ENCODE measurements at regions of chr1 and their contacts with region 1.

Region 1: DNA sequence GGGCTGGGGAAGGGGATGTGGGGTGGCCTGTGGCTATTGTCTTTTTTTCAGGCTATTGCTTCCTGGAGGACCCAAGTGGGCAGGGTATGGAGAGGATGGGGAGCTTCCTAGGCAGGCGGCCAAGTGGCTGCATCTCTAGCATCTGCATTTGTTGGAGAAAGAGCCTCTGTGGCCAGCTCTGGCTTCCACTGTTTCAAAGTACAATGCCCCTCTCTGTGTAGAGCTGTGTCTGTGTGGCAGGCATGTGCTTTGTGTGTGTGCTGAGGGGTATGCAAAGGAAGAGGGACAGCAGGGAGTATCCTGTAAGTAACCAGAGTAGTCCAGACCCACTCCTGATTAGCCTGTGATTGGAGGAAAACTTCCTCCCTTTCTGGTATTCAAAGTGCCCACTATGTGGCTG is 40.6 kb downstream of the KCNA2 start:
- DNase-seq: peak in 9 of 10 donors; percentile 87 to 96 (median 90)
- H3K4me3 ChIP-seq: peak overlapping the region in 7 of 59 donors; percentile 6 to 31 (median 17)
- H3K27ac ChIP-seq: peak overlapping the region in 44 of 59 donors; percentile 1 to 82 (median 58)
- H3K27me3 ChIP-seq: peaks cover 0 to 2% (median 0%) of the 10 kb centered on the region in 45 donors
- CTCF ChIP-seq: peak in 8 of 56 donors; percentile 13 to 51 (median 26)

Region 2: GRCh38 chr1:110155878-110156522 is 409.6 kb before region 1 on chr1:
- intact Hi-C with region 1: no loop called
- DNase-seq: no peak
- H3K4me3 ChIP-seq: no peak overlapping the region
- H3K27ac ChIP-seq: peak overlapping the region in 1 of 59 donors; percentile 20
- H3K27me3 ChIP-seq: peaks cover 0 to 27% (median 5%) of the 10 kb centered on the region in 45 donors
- CTCF ChIP-seq: no peak

Region 3: DNA sequence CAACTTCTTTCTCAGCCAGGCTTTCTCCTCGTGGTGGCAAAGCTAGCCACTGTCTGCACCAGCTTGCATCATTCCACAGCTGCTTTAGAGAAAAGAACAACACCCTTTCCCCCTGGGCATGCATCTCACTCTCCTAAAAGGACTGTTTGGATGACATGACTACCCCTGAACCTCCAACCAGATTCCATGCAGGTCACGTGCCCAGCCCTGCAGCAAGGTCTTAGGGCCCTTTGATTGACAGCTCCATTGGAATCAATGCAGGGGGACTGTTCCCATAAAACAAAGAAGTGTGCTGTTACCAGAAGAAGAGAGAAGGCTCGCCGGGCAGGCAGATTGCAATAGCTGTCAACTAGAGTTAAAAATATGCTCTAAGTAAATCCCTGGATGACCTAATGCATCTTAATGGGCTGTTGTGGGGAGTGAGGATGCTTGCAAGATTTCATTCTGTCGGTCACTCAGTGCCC is 16.1 kb after region 1 on chr1:
- intact Hi-C with region 1: loop called in 1 of 2 experiments (anchors 2 kb)
- DNase-seq: peak in 8 of 10 donors; percentile 28 to 73 (median 49)
- H3K4me3 ChIP-seq: peak overlapping the region in 10 of 59 donors; percentile 3 to 45 (median 18)
- H3K27ac ChIP-seq: peak overlapping the region; percentile 52 to 95 (median 85)
- H3K27me3 ChIP-seq: no peaks in the 10 kb centered on the region
- CTCF ChIP-seq: peak in 1 of 56 donors; percentile 37

Measured in dorsolateral prefrontal cortex (tissue), 120 donors.